ENCODE measurements at regions of chr13 and their contacts with region 1.

Region 1: DNA sequence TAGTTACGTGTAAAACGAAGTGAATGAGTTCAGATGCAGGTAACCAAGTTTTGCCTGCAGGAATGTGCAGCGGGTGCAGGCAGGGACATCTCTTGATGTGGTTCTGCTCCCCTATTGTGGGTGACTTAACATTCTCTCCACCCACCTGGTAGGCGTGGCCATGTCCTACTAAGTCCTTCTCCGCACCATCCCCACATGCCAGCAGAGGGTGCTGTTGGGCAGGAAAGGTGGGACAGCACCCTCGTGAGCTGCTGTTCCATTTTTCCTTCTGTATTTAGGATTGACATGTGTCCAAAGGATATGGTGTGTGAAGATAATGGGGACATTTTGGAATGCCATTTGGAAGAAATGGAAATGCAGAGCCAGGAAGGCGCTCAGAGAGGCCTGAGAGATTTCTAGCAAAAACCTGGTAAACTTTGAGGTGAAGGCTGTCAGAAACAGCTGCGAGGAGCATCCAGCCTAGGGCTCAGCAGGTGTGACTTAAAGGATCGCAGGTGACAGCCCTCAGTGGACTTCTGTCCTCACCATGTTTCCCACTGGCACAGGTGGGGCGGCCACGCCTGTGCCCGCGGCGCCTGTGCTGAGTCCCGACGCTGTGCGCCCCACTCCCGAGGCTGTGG is 26.2 kb upstream of the MCF2L start:
- DNase-seq: peak; percentile 93
- H3K4me3 ChIP-seq: peak overlapping the region; percentile 57 to 67
- H3K27ac ChIP-seq: no peak overlapping the region; a peak in 1 of 4 replicates
- H3K4me1 ChIP-seq: peaks cover 0 to 27% of the 10 kb centered on the region in 2 experiments; a peak in 2 of 4 replicates
- H3K27me3 ChIP-seq: no peaks in the 10 kb centered on the region; the same call in 1 of the 2 replicates
- CTCF ChIP-seq: peak; percentile 95
- EP300 ChIP-seq: peak in 1 of 2 experiments; percentile 48; a peak in 1 of 4 replicates
- RAD21 ChIP-seq: peak; percentile 99

Region 2: DNA sequence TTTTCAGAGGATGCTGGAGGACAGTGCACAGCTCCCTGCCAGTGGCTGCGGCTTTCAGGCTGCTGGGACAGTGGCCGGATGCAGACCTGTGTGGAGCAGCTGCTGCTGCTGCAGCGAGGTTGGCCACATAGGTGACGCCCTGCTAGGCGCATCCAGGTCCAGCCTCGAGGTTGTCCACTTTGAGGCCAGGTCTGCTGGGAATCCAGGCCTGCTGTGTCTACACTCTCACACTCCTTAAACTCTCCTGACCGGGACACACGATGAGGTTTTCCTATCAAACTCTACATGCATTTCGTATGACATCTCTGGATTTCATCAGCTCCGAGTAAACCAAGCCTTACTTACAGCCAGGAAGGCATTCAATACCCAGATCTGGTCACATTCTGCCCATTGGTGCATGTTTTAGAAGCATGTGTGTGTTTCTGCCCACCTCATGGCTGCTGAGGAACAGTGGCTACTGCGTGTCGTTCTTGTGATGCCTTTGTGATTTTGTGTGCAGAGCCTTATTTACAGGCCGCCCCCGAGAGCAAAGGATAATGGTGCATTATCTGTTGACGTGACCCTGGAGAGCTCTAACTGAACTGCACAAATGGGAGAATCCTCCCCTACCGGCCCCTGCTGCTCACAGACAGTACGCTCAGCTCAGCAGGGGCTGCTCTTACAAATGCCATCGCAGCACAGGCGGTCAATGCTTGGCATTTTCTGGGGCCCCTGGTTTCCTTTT is 13.9 kb after region 1 on chr13:
- CTCF ChIA-PET with region 1: interaction called, 30 read pairs
- POLR2A ChIA-PET with region 1: interaction called, 3 read pairs
- DNase-seq: no peak
- H3K4me3 ChIP-seq: no peak overlapping the region
- H3K27ac ChIP-seq: no peak overlapping the region
- H3K4me1 ChIP-seq: no peaks in the 10 kb centered on the region
- H3K27me3 ChIP-seq: peaks cover 15% of the 10 kb centered on the region; the same call in 1 of the 2 replicates
- CTCF ChIP-seq: no peak
- EP300 ChIP-seq: no peak
- RAD21 ChIP-seq: no peak

Region 3: GRCh38 chr13:112968908-112969691 is 26.3 kb after region 1 on chr13 and contains the start of gene MCF2L:
- CTCF ChIA-PET with region 1: interaction called, 34 read pairs
- POLR2A ChIA-PET with region 1: interaction called, 5 read pairs
- DNase-seq: peak; percentile 93
- H3K4me3 ChIP-seq: peak within 1 kb of the TSS; percentile 38 to 55
- H3K27ac ChIP-seq: peak within 1 kb of the TSS in 1 of 2 experiments; percentile 79; a peak in 2 of 4 replicates
- H3K4me1 ChIP-seq: peaks cover 0 to 19% of the 10 kb centered on the region in 2 experiments; a peak in 2 of 4 replicates
- H3K27me3 ChIP-seq: peaks cover 33% of the 10 kb centered on the region
- CTCF ChIP-seq: peak; percentile 25; the same call in 1 of the 2 replicates
- EP300 ChIP-seq: no peak
- RAD21 ChIP-seq: peak; percentile 52
- polyA plus RNA-seq, gene MCF2L: 0.56 and 1.1 TPM in 2 replicates

Region 4: DNA sequence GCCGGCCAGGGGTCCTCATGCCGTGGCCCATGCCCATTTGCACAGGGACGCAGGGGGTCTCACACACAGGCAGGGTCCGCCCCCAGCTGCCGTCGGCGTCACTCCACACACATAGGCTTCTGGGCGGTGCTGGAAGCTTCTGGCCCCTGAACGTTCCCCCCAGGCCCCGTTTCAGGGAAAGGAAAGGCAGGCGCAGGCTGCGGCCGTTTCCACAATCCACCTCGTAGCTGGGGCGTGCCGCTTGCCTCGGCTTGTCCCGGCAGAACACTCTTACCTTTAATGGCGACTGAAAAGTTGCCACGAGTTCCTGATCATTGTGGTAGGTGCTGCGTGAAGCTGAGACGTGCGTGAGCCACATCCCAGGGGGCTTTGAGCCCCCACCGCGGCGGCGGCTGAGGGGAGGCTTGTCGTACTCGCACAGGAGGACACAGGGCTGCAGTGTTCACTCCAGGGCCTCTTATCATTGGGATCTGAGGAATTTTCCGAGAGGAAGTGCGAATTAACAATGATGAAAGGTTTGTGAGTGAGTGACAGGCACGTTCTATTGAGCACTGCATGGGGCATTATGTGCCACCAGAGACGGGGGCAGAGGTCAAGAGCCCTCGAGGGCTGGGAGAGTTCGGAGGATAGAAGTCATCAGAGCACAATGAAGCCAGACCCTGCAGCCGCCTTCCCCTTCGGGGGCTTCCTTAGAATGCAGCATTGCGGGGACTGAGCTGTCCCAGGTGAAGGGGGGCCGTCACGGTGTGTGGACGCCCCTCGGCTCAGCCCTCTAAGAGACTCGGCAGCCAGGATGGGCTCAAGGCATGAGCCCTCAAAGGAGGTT is 79.8 kb after region 1 on chr13:
- CTCF ChIA-PET with region 1: interaction called, 150 read pairs
- POLR2A ChIA-PET with region 1: no interaction called
- DNase-seq: no peak
- H3K4me3 ChIP-seq: no peak overlapping the region
- H3K27ac ChIP-seq: no peak overlapping the region
- H3K4me1 ChIP-seq: peaks cover 0 to 16% of the 10 kb centered on the region in 2 experiments; a peak in 1 of 4 replicates
- H3K27me3 ChIP-seq: peaks cover 4% of the 10 kb centered on the region; the same call in 1 of the 2 replicates
- CTCF ChIP-seq: no peak
- EP300 ChIP-seq: no peak
- RAD21 ChIP-seq: no peak

Region 5: GRCh38 chr13:113162771-113163685 is 220.2 kb after region 1 on chr13:
- CTCF ChIA-PET with region 1: no interaction called
- POLR2A ChIA-PET with region 1: no interaction called
- DNase-seq: no peak
- H3K4me3 ChIP-seq: no peak overlapping the region
- H3K27ac ChIP-seq: no peak overlapping the region
- H3K4me1 ChIP-seq: no peaks in the 10 kb centered on the region; a peak in 1 of 4 replicates
- H3K27me3 ChIP-seq: no peaks in the 10 kb centered on the region
- CTCF ChIP-seq: no peak
- EP300 ChIP-seq: no peak
- RAD21 ChIP-seq: no peak